Transverse colon (tissue), 4 donors: ENCODE measurements at regions of chr6 and their contacts with region 1.

Region 1: GRCh38 chr6:11653028-11653583 is 115.6 kb downstream of the TMEM170B start:
- DNase-seq: no peak
- H3K4me3 ChIP-seq: no peak overlapping the region
- H3K27ac ChIP-seq: no peak overlapping the region
- H3K4me1 ChIP-seq: peaks cover 4 to 15% (median 10%) of the 10 kb centered on the region in 4 donors
- H3K27me3 ChIP-seq: no peaks in the 10 kb centered on the region
- CTCF ChIP-seq: no peak
- EP300 ChIP-seq: no peak
- POLR2A ChIP-seq: no peak

Region 2: GRCh38 chr6:11055127-11055627 is 597.9 kb before region 1 on chr6:
- in situ Hi-C with region 1: no loop called
- intact Hi-C with region 1: no loop called
- DNase-seq: no peak
- H3K4me3 ChIP-seq: no peak overlapping the region
- H3K27ac ChIP-seq: no peak overlapping the region
- H3K4me1 ChIP-seq: no peaks in the 10 kb centered on the region
- H3K27me3 ChIP-seq: peaks cover 9% of the 10 kb centered on the region
- CTCF ChIP-seq: no peak
- EP300 ChIP-seq: no peak
- POLR2A ChIP-seq: no peak

Region 3: GRCh38 chr6:11730641-11731040 is 77.5 kb after region 1 on chr6:
- in situ Hi-C with region 1: no loop called
- intact Hi-C with region 1: no loop called
- DNase-seq: peak; percentile 16
- H3K4me3 ChIP-seq: no peak overlapping the region
- H3K27ac ChIP-seq: no peak overlapping the region
- H3K4me1 ChIP-seq: peaks cover 0 to 16% (median 8%) of the 10 kb centered on the region in 4 donors
- H3K27me3 ChIP-seq: no peaks in the 10 kb centered on the region
- CTCF ChIP-seq: no peak
- EP300 ChIP-seq: no peak
- POLR2A ChIP-seq: no peak

Region 4: DNA sequence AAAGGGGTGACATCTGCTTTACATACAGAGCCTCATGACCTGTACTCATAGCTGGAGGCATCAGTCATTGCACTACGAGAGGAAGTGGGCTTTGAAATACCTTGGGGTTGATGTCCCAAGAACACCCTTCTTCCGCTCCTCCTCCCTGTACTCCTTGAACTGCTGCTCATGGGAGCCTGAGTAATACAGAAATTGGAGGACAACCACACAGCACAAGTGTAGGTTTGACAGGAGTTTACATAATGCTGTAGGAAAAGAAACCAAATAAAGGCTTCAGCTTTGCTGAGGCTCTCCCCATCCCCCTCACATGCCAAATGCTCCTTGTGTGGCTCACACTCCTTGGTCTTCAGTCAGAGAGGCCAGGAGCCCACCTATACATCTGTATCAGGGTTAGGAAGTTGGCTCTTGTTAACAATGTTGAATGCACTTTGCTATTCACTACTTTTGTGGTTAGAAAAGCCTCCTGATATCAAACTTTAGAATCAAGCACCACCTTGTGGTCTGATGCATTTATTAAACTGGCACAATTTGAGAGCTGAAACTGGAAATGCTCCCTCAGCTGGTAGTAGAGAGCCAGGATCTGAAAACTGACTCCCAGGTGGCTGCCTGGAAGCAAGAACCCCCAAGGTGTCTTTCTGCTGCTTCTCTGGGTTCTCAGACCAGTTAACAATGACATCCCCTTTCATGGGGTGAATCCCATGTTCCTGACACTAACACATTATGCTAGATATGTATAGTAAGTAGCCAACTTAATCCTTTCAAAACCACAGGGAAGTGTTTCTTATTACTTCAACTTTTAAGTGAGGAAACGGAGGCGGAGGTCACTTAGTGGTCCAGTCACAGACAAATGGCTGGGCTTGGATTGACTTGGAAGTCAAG is 580.8 kb after region 1 on chr6:
- in situ Hi-C with region 1: loop called (anchors 10 to 25 kb)
- intact Hi-C with region 1: loop called (anchors 5 kb)
- DNase-seq: peak; percentile 28
- H3K4me3 ChIP-seq: no peak overlapping the region
- H3K27ac ChIP-seq: peak overlapping the region; percentile 9 to 37 (median 34)
- H3K4me1 ChIP-seq: peaks cover 5 to 28% (median 12%) of the 10 kb centered on the region in 4 donors
- H3K27me3 ChIP-seq: no peaks in the 10 kb centered on the region
- CTCF ChIP-seq: peak; percentile 68 to 94 (median 74)
- EP300 ChIP-seq: no peak
- POLR2A ChIP-seq: no peak

Region 5: DNA sequence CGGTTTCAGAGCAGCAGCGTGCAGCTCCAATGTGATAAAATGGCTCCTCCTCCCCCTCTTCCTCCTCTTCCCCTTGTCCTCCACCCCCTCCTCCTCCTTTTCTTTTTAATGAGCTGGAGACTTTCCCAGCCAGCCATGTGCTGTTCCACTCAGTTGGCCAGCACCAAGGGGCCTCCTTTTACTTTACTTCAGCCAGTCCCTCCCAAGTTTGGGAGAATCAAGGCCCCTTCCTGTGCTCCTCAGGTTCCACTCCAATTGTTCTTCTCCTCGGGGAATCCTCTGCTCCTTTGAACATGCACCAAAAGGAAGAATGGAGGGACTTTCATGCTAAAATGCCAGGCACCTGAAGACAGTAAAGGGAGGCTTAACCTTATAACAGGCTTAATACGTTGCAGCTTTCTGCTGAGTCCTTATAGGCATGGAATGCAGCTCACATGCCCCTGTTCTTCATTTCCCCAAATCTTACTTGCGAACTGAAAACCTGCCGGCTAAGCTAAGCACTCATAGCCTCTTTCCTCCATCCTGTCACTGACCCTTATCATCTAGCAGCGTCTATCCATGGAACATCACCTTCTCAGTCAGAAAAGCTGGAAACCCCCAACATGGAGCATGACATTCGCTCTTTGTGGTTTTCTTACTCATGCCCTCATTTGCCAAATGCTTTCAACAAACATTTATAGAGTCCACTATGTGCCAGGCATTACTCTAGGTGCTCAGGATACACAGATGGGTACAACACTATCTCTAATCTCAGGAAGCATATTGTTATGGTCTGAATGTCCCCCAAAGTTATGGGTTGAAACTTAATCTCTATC is 1234.1 kb after region 1 on chr6:
- in situ Hi-C with region 1: no loop called
- intact Hi-C with region 1: no loop called
- DNase-seq: no peak
- H3K4me3 ChIP-seq: no peak overlapping the region
- H3K27ac ChIP-seq: no peak overlapping the region
- H3K4me1 ChIP-seq: no peaks in the 10 kb centered on the region
- H3K27me3 ChIP-seq: peaks cover under 1% of the 10 kb centered on the region
- CTCF ChIP-seq: no peak
- EP300 ChIP-seq: no peak
- POLR2A ChIP-seq: no peak